ENCODE measurements at regions of chr17 and their contacts with region 1.

Region 1: GRCh38 chr17:68533887-68534694 is 21.9 kb downstream of the PRKAR1A start:
- DNase-seq: no peak
- H3K4me3 ChIP-seq: no peak overlapping the region
- H3K27ac ChIP-seq: no peak overlapping the region
- H3K4me1 ChIP-seq: no peaks in the 10 kb centered on the region
- H3K27me3 ChIP-seq: no peaks in the 10 kb centered on the region
- CTCF ChIP-seq: peak in 1 of 3 experiments; percentile 48; a peak in 2 of 4 replicates
- EP300 ChIP-seq: no peak
- POLR2A ChIP-seq: no peak
- RAD21 ChIP-seq: peak; percentile 33 to 44

Region 2: GRCh38 chr17:68759343-68760132 is 225.4 kb after region 1 on chr17:
- CTCF ChIA-PET with region 1: interaction called, 16 read pairs
- POLR2A ChIA-PET with region 1: interaction called, 3 read pairs
- DNase-seq: peak; percentile 84 to 85
- H3K4me3 ChIP-seq: peak overlapping the region in 1 of 4 experiments; percentile 34; a peak in 1 of 8 replicates
- H3K27ac ChIP-seq: peak overlapping the region; percentile 82
- H3K4me1 ChIP-seq: peaks cover 2 to 7% (median 5%) of the 10 kb centered on the region in 4 experiments; a peak in 5 of 7 replicates
- H3K27me3 ChIP-seq: no peaks in the 10 kb centered on the region
- CTCF ChIP-seq: peak; percentile 85 to 98 (median 94)
- EP300 ChIP-seq: no peak
- POLR2A ChIP-seq: peak in 1 of 2 experiments; percentile 46; a peak in 1 of 3 replicates
- RAD21 ChIP-seq: peak; percentile 100

Measured in H1 (cell line).